MCF 10A (cell line): ENCODE measurements at regions of chr16 and their contacts with region 1.

Region 1: DNA sequence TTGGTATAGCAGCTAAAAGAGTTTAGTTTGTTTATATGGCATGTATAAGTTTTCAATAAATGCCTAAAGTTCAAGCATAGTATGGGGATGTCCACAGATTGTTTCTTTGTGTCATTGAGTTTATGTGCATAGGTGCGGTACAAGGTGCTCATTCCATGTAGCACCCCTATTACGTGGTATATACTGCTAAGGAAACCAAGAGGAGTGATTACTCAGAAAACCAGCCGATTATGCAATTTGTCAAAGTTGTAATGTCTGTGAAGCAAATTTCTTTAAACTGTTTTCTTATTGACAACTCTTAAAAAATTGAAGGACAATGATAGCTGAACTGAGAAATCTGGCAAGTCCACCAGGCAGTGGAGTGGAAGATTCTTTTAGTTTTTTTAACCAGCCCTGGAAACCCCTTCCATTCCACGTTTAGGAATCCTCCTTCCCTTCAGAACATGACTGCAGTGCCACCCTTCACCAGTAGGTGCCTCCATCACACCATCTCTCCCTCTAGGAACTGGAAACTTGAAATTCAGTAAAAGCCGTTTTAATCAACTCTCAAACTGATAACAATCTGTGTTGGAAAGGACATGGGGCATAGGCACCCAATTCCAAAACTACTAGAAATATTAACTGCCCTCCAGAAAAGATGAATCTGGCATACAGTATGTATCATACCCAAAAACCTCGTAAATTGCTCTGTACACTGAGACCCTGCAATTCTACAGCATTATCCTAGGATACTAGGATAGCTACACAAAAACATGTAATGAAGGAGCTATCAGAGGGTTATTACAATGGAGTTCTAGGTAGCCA is 43.5 kb downstream of the REXO5 start:
- DNase-seq: peak; percentile 78
- H3K4me3 Mint-ChIP-seq: no peak overlapping the region
- H3K27ac Mint-ChIP-seq: peak overlapping the region; percentile 79
- H3K4me1 Mint-ChIP-seq: peaks cover 19% of the 10 kb centered on the region
- H3K27me3 Mint-ChIP-seq: no peaks in the 10 kb centered on the region
- CTCF ChIP-seq: peak; percentile 95

Region 2: GRCh38 chr16:20675488-20676267 is 174.1 kb before region 1 on chr16:
- CTCF ChIA-PET with region 1: no interaction called
- POLR2A ChIA-PET with region 1: no interaction called
- intact Hi-C with region 1: no loop called
- DNase-seq: peak; percentile 36
- H3K4me3 Mint-ChIP-seq: peak overlapping the region; percentile 80
- H3K27ac Mint-ChIP-seq: peak overlapping the region; percentile 79
- H3K4me1 Mint-ChIP-seq: peaks cover 24% of the 10 kb centered on the region
- H3K27me3 Mint-ChIP-seq: no peaks in the 10 kb centered on the region
- CTCF ChIP-seq: no peak

Region 3: GRCh38 chr16:20814784-20815183 is 35.0 kb before region 1 on chr16:
- CTCF ChIA-PET with region 1: interaction called, 12 read pairs
- POLR2A ChIA-PET with region 1: interaction called, 5 read pairs
- intact Hi-C with region 1: no loop called
- DNase-seq: no peak
- H3K4me3 Mint-ChIP-seq: no peak overlapping the region
- H3K27ac Mint-ChIP-seq: no peak overlapping the region
- H3K4me1 Mint-ChIP-seq: peaks cover 6% of the 10 kb centered on the region
- H3K27me3 Mint-ChIP-seq: no peaks in the 10 kb centered on the region
- CTCF ChIP-seq: no peak

Region 4: DNA sequence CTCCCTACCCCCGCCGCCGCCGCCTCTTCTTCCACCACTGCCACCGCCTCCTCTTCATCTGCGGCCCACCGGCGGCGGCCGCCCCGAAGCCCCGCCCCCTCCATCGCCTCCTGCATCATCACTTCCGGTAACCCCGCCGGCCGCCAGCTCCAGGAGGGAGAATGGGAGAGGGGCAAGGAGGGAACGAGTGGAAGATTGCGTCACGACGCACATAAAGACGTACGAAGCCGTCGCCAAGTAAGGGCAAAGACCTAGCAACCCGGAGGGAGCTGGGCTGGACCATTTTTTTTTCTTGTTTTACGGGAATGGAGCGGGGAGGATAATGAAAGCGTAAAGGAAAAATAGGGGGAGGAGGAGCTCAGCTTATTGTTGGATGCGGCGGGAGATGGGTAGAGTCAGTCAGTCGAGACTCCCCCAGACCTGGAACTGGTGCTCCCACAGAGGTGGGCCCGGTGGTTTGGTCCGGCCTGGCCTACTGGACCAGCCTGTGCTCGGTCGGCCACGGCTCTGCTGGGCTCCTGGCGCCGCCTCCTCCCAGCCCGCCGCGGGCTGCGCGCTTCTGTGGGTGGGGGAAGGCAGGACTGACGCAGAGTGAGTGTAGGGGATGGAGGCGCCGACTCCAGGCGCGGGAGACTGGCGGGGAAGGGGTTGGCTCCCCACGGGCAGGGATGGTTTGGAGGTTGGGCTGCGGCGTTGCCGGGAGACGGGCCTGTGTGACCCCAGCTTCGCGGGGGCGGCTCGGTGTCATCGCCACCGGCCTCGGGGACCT is 50.7 kb after region 1 on chr16 and contains the starts of genes DCUN1D3 and LYRM1:
- CTCF ChIA-PET with region 1: interaction called, 47 read pairs
- POLR2A ChIA-PET with region 1: interaction called, 170 read pairs
- intact Hi-C with region 1: loop called (anchors 1 kb)
- DNase-seq: peak; percentile 99
- H3K4me3 Mint-ChIP-seq: peak within 1 kb of the TSS; percentile 75
- H3K27ac Mint-ChIP-seq: peak within 1 kb of the TSS; percentile 97
- H3K4me1 Mint-ChIP-seq: peaks cover 63% of the 10 kb centered on the region
- H3K27me3 Mint-ChIP-seq: no peaks in the 10 kb centered on the region
- CTCF ChIP-seq: no peak
- total RNA-seq, gene DCUN1D3: 31.0 and 31.7 TPM in 2 replicates
- total RNA-seq, gene LYRM1: 67.3 and 92.8 TPM in 2 replicates

Region 5: GRCh38 chr16:20944861-20945574 is 95.2 kb after region 1 on chr16:
- CTCF ChIA-PET with region 1: interaction called, 13 read pairs
- POLR2A ChIA-PET with region 1: interaction called, 3 read pairs
- intact Hi-C with region 1: loop called (anchors 1 kb)
- DNase-seq: peak; percentile 25
- H3K4me3 Mint-ChIP-seq: no peak overlapping the region
- H3K27ac Mint-ChIP-seq: no peak overlapping the region
- H3K4me1 Mint-ChIP-seq: no peaks in the 10 kb centered on the region
- H3K27me3 Mint-ChIP-seq: no peaks in the 10 kb centered on the region
- CTCF ChIP-seq: no peak

Region 6: DNA sequence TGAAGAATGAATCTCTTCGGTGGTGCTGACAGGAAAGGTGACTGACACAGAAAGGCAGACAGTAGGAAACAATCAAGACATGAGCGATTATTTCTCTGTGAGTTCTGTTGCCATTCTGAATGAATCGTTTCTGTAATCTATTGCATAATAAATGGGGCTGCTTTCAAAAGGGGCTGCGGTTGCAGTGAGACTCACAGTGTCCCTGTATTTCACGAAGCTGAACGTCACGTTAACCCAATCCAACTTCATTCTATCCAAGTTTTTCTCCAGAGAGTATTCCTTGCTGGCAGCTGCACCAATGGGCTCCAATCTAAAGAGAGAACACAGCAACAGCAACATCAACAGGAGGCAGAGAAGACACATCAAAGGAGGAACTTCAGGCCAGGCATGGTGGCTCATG is 225.5 kb after region 1 on chr16:
- CTCF ChIA-PET with region 1: interaction called, 32 read pairs
- POLR2A ChIA-PET with region 1: interaction called, 3 read pairs
- intact Hi-C with region 1: no loop called
- DNase-seq: no peak
- H3K4me3 Mint-ChIP-seq: no peak overlapping the region
- H3K27ac Mint-ChIP-seq: no peak overlapping the region
- H3K4me1 Mint-ChIP-seq: peaks cover 6% of the 10 kb centered on the region
- H3K27me3 Mint-ChIP-seq: no peaks in the 10 kb centered on the region
- CTCF ChIP-seq: no peak

Region 7: DNA sequence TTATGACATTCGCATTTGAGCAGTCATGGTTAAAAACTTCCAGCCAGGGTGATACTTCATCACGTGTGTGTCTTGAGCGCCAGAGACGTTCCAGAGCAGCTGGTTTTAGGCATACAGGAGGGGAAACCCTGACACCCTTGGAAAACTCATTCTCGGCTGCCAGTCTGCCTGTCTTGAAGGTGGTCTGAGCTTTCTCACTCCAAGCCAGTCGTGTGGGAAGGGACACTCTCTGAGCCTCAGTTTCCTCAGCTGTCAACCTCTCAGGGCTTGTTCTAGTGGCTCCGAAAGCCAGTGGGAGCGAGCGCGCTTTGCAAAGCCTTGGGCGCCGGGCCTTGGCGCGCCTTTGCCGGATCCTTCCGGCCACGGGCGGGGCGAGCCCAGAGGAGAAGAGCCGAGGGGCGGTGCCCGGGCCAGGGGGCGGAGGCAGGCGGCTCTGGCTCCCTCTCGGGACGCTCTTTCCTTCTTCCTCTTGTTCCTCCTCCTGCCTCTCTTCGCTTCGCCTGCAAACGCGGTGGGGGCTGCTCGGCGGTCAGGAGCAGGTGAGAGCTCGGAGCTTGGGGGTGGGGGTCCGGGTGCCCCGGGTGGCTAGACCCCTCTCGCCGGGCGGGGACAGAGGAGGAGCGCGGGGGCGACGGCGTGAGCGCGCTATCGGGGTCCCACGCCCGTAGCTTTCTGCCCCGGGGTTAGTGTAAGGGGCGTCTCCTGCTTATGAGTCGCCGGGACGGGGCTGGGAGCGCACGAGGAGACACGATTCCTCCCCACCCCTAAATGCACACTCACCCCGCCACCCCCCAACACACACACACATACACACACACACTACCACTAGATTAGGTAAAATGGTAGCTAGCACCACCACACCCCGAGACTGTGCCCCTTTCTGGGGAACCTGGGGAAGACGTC is 308.7 kb after region 1 on chr16 and contains the start of gene LDAF1:
- CTCF ChIA-PET with region 1: interaction called, 67 read pairs
- POLR2A ChIA-PET with region 1: interaction called, 34 read pairs
- intact Hi-C with region 1: loop called (anchors 2 kb)
- DNase-seq: peak; percentile 82
- H3K4me3 Mint-ChIP-seq: peak within 1 kb of the TSS; percentile 97
- H3K27ac Mint-ChIP-seq: peak within 1 kb of the TSS; percentile 95
- H3K4me1 Mint-ChIP-seq: peaks cover 15% of the 10 kb centered on the region
- H3K27me3 Mint-ChIP-seq: no peaks in the 10 kb centered on the region
- CTCF ChIP-seq: no peak
- total RNA-seq, gene LDAF1: 30.1 and 37.8 TPM in 2 replicates